ENCODE measurements at regions of chr6 and their contacts with region 1.

Region 1: DNA sequence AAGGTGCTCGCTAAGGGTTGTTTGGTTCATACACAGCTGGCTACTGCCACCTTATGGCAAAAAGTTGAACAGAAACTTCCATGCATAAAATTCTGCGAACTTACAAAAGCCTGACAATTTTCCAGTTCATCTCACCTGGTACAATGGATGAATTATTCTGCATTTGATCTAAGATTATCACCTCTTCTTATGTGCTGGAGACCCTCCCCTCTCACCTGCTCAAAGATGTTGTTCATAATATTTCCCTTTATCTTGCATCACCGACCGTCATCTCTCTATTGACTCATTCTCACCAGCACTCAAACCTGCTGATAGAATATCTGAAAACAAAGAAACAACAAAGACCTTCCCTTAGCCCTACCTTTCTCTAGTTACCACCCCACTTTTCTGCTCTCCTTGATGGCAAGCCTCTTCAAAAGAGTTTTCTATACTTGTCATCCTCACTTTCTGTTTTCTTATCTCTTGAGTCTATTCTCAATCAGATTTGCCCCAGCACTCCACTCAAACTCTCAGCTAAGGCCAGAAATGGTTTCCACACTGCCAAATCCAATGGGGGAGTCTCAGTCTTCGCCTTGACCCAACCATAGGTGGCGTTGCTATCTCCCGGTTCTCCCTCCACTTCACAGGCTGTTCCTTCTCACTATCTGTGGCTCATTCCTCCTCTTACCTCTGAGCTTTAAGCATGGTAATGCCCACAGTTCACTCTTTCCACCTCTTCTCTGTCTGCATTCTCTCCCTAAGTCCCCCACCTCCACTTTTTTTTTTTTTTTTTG is 25.8 kb downstream of the SNRNP48 start:
- DNase-seq: peak; percentile 60
- CTCF ChIP-seq: peak; percentile 55

Region 2: DNA sequence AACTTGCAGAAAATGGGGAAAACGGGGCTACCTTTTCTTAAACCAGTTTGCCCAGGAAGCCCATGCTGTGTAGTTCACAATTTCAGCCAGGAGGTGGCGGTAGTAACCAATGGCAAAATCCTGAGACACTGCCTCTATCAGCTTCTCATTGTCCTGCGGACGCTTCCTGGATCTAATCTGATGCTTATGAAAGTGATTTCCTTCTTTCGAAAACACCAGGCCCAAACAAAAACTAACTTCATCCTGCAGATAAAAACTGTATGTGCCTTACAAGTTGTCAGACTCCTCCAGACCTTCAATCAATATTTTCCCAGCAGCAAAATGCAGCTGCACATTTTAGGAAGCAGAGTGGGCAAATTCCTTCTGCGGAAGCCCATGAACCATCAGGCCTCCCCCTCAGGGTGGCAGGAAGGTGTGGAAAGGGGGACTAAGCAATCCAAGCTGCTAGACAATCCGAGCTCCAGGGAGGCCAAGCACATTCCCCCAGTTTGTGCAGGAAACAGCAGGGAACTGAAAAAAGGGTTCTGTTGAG is 938.8 kb before region 1 on chr6:
- in situ Hi-C with region 1: loop called (anchors 25 kb)
- DNase-seq: peak; percentile 77
- CTCF ChIP-seq: peak; percentile 75

Region 3: DNA sequence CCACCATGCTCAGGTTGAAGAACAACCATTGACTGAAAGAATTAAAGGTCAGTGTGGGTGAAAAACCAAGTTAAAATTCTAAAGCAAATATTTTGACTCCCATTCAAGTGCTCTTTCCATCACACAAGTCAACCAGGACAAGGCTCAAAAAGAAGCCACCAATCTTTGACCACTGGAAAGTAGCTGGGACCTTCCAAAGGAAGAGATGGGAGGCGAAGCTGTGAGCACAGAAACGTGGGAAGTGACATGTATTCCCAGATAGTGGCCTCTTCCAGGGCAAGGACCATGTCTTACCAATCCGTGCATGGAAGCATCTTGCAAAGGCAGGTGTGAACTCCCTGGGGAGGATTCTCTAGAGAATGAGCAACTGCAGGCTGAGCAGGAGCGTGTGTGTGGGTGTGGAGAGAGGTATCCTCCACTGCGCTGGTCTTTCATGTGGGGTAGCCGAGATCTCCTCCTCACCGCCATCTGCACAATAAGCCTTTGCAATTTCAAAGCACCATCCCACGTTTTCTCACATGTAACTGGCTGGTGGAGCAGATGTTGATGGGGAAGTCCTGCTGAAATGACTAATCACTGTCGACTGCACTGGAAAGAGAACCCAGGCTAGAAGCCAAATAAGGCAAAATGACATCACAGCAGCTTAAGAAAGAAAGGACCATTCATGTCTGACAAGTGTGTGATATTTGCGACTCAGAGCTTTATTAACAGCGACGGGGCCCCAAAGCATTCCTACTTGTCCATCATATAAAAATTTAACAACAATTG is 697.4 kb before region 1 on chr6:
- in situ Hi-C with region 1: no loop called
- DNase-seq: peak; percentile 87
- CTCF ChIP-seq: no peak

Region 4: DNA sequence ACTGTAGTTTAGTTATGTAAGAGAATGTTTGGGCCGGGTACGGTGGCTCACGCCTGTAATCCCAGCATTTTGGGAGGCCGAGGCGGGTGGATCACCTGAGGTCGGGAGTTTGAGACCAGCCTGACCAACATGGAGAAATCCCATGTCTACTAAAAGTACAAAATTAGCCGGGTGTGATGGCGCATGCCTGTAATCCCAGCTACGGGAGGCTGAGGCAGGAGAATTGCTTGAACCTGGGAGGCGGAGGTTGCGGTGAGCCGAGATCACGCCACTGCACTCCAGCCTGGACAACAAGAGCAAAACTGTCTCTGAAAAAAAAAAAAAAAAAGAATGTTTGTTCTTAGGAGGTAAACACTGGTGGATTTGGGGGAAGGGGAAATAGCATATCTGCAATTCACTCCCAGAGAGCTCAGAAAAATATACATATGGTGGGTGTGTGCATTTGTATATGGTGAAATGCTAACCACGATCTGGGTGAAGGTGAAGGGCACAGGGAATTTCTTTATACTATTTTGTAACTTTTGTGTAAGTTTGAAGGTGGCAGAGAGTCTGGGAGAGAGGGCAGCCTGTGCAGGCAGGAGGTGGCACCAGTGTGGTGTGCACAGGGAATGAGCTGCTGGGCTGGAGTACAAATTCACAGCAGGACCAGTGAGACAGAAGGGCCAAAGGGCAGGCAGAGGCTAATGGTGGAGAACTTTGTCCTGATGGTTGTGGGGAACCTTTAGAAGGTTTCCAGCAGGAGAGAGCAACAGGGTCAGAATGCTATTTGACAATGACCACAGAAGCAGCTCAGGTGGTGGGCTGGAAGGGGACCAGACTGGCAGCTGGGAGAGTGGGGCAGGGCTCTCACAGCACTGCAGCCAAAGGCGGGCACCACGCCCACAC is 345.2 kb before region 1 on chr6:
- in situ Hi-C with region 1: loop called (anchors 10 kb)
- DNase-seq: no peak
- CTCF ChIP-seq: no peak

Region 5: DNA sequence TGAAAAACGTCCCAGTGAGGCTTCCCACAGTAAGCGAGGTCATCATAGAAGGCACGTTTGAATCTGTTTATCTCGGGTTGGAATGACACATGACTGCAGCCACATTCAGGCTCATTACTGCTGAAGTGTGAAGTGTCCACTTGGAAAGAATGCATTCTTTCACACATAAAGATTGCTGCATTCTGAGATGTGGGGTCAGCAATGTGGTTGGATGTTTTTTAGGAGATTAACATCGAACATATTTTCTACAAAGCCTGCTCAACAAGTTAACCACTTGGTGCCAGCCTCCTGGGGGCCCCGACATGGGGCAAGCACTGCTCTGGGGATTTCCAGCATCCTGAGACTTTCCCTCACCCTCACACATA is 190.0 kb after region 1 on chr6:
- in situ Hi-C with region 1: no loop called
- DNase-seq: no peak
- CTCF ChIP-seq: no peak

Measured in GM13976 (cell line).